PC-3 (cell line): ENCODE measurements at regions of chr7 and their contacts with region 1.

Region 1: GRCh38 chr7:80918909-80919662 is at the start of gene SEMA3C:
- DNase-seq: peak; percentile 95
- ATAC-seq: peak; percentile 73
- H3K4me3 ChIP-seq: peak within 1 kb of the TSS; percentile 96
- H3K27ac ChIP-seq: peak within 1 kb of the TSS; percentile 98
- H3K4me1 ChIP-seq: peaks cover 71% of the 10 kb centered on the region
- H3K27me3 ChIP-seq: no peaks in the 10 kb centered on the region
- CTCF ChIP-seq: no peak
- total RNA-seq, gene SEMA3C: 27.4 and 28.0 TPM in 2 replicates

Region 2: DNA sequence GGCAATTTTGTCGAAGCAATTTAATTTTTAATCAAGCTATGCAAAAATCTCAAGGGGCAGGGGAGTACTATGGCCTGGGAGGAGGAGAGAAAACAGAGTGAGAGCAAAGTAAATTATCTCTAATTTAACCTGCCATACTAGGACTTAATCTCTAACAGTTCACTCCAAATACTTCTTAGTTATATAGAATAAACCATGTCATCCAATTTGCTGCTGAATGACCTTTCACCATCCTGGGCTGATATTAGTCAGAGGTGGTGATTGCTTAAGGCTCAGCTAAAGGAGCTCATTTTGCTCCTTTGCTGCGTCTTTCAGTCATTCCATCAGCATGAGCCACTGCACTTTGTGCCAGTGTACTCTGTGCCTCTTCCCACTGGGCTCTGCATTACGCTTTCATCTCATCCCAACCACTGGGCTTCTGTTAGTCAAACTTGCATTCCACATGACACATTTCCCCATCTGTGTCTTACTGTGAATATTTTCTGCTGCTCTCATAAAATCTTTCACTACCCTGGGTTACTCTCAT is 196.4 kb before region 1 on chr7:
- CTCF ChIA-PET with region 1: no interaction called
- POLR2A ChIA-PET with region 1: no interaction called
- intact Hi-C with region 1: loop called (anchors 10 kb)
- DNase-seq: peak; percentile 98
- ATAC-seq: peak; percentile 98
- H3K4me3 ChIP-seq: peak overlapping the region; percentile 38; the same call in 1 of the 2 replicates
- H3K27ac ChIP-seq: peak overlapping the region; percentile 98
- H3K4me1 ChIP-seq: peaks cover 40% of the 10 kb centered on the region
- H3K27me3 ChIP-seq: no peaks in the 10 kb centered on the region
- CTCF ChIP-seq: no peak

Region 3: DNA sequence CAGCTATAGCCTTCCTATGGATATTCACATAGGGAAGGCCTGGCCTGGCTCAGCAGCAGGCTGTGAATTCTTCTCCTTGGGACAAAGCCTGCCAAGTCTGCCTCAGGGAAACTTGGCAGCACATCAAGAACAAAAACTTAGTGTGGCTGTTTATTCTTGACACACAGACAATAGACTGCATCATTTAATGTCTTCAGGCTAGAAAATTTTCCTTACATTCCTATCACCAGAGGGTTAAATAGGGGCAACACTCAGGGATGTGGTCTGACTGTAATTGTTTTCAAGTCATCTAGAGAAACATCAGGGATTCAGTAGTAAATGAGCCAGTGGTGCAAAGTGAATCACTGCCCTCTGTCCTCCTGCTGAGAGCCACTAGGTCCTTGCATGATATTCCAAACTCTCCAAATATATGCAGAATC is 137.5 kb before region 1 on chr7:
- CTCF ChIA-PET with region 1: no interaction called
- POLR2A ChIA-PET with region 1: no interaction called
- intact Hi-C with region 1: no loop called
- DNase-seq: peak; percentile 93
- ATAC-seq: peak; percentile 55
- H3K4me3 ChIP-seq: no peak overlapping the region
- H3K27ac ChIP-seq: peak overlapping the region; percentile 18
- H3K4me1 ChIP-seq: peaks cover 56% of the 10 kb centered on the region
- H3K27me3 ChIP-seq: no peaks in the 10 kb centered on the region
- CTCF ChIP-seq: no peak

Region 4: DNA sequence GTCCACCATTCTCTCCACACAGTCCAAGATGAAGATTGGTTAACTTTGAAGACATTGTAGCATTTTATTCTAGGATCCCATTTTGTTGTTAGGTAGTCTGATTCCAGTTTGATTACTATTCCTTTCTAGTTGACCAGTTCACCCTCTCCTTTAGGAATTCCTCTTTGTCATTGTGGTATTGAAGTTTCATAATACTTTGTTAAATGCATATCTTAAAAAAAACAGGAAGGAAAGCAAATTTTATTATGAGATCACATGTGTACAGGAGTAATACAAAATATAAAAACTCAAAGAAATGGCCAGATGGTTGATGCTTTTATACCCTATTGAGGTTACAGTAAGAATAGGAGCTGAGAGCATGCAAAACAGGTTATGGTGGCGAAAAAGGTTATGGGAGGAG is 15.2 kb after region 1 on chr7:
- CTCF ChIA-PET with region 1: no interaction called
- POLR2A ChIA-PET with region 1: interaction called, 15 read pairs
- intact Hi-C with region 1: no loop called
- DNase-seq: peak; percentile 32
- ATAC-seq: no peak
- H3K4me3 ChIP-seq: no peak overlapping the region
- H3K27ac ChIP-seq: no peak overlapping the region
- H3K4me1 ChIP-seq: peaks cover 15% of the 10 kb centered on the region
- H3K27me3 ChIP-seq: no peaks in the 10 kb centered on the region
- CTCF ChIP-seq: no peak

Region 5: DNA sequence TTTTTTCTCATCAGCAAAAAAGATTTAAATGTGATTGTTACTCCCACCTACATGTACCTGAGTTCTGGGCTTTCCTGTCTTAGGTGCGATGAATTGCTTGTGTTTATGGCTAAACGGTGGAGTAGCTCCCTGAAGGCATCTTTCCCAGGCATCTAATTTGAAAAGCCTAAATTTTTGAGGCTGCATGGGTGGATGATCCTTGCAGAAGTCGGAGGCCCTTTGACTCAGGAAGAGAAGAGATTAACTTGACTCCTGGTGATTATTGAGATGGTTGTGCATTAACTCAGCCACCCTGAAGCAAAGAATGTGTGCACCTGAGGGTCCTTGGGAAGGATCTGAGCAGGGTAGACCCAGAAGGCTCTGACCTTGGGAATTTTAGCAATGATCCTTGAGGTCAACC is 155.3 kb after region 1 on chr7:
- CTCF ChIA-PET with region 1: no interaction called
- POLR2A ChIA-PET with region 1: interaction called, 3 read pairs
- intact Hi-C with region 1: loop called (anchors 1 kb)
- DNase-seq: no peak
- ATAC-seq: no peak
- H3K4me3 ChIP-seq: no peak overlapping the region
- H3K27ac ChIP-seq: peak overlapping the region; percentile 98
- H3K4me1 ChIP-seq: peaks cover 30% of the 10 kb centered on the region
- H3K27me3 ChIP-seq: no peaks in the 10 kb centered on the region
- CTCF ChIP-seq: no peak

Region 6: DNA sequence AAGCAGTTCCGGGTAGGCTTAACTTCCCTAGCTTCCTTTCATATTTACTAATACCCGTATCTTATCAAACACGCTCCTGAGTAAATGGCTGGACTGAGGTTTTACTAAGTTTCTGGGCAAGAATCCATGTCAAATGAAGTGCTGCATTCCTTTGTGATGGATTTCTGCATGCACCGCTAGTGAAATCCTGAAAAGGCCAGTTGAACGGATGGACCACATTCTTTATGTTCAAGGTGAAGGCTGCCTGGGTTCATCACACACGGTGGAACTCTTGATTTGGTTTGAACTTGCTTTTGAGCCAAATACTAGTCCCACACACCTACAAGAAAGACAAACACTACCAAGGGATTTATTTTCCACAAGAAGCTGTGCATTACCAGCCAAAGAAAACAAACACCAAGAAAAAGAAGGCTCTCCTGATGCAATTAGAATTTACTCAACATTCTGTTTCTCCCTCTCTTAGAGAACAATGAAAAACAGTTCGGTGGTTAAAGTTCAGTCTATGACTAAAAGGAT is 254.7 kb after region 1 on chr7:
- CTCF ChIA-PET with region 1: no interaction called
- POLR2A ChIA-PET with region 1: no interaction called
- intact Hi-C with region 1: loop called (anchors 5 kb)
- DNase-seq: peak; percentile 70
- ATAC-seq: peak; percentile 80
- H3K4me3 ChIP-seq: no peak overlapping the region; the same call in 1 of the 2 replicates
- H3K27ac ChIP-seq: no peak overlapping the region
- H3K4me1 ChIP-seq: peaks cover 9% of the 10 kb centered on the region
- H3K27me3 ChIP-seq: no peaks in the 10 kb centered on the region
- CTCF ChIP-seq: no peak

Region 7: GRCh38 chr7:81410471-81411125 is 491.5 kb after region 1 on chr7:
- CTCF ChIA-PET with region 1: no interaction called
- POLR2A ChIA-PET with region 1: no interaction called
- intact Hi-C with region 1: loop called (anchors 1 kb)
- DNase-seq: peak; percentile 94
- ATAC-seq: peak; percentile 60
- H3K4me3 ChIP-seq: peak overlapping the region; percentile 24
- H3K27ac ChIP-seq: peak overlapping the region; percentile 89
- H3K4me1 ChIP-seq: peaks cover 64% of the 10 kb centered on the region
- H3K27me3 ChIP-seq: no peaks in the 10 kb centered on the region
- CTCF ChIP-seq: no peak